ENCODE measurements at regions of chrX and their contacts with region 1.

Region 1: DNA sequence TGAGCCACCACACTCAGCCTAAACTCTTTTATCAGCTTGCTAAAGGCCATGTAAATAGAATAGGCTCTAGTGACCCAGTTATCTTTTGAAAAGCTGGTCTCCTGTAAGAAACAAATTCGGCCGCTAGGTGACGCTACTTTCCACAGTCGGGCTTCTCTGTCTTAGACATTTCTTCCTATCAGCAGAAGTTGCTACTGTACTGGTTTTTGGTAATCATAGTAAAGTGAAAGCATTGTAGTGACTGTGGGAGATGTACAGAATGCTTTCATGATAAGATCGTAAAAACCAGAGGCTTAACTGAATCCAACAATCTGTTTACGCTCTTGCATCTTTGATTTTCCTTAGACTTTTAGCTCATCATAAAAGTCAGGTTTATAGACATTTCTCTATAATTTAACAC is 82.6 kb downstream of the GK start:
- DNase-seq: peak; percentile 82
- H3K4me3 Mint-ChIP-seq: no peak overlapping the region
- H3K27ac Mint-ChIP-seq: no peak overlapping the region
- H3K4me1 Mint-ChIP-seq: peaks cover 10% of the 10 kb centered on the region
- H3K27me3 Mint-ChIP-seq: no peaks in the 10 kb centered on the region

Region 2: GRCh38 chrX:30230395-30230794 is 505.4 kb before region 1 on chrX and contains the start of gene MAGEB3:
- CTCF ChIA-PET with region 1: no interaction called
- POLR2A ChIA-PET with region 1: no interaction called
- intact Hi-C with region 1: no loop called
- DNase-seq: no peak
- H3K4me3 Mint-ChIP-seq: no peak within 1 kb of the TSS
- H3K27ac Mint-ChIP-seq: no peak within 1 kb of the TSS
- H3K4me1 Mint-ChIP-seq: no peaks in the 10 kb centered on the region
- H3K27me3 Mint-ChIP-seq: no peaks in the 10 kb centered on the region
- total RNA-seq, gene MAGEB3: not detected

Region 3: DNA sequence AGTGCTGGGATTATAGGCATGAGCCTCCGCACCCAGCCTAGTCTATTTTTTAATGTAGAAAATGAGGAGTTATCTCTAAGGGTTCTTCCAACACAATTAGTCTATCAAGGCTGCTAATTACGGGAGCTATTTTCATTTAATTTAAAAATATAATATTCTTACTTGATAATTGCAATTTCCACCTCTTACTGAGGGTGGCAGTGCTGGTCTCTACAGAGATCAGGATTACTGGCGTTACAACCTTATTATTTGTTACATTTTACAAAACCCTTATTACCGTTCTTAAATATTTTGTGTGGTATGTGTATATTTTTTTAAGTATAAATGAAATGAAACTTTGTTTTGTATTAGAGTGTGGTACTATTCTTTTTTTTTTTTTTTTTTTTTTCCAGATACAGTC is 100.2 kb before region 1 on chrX:
- CTCF ChIA-PET with region 1: interaction called, 17 read pairs
- POLR2A ChIA-PET with region 1: no interaction called
- intact Hi-C with region 1: no loop called
- DNase-seq: no peak
- H3K4me3 Mint-ChIP-seq: no peak overlapping the region
- H3K27ac Mint-ChIP-seq: no peak overlapping the region
- H3K4me1 Mint-ChIP-seq: peaks cover 2% of the 10 kb centered on the region
- H3K27me3 Mint-ChIP-seq: no peaks in the 10 kb centered on the region

Region 4: GRCh38 chrX:30821116-30821515 is 85.3 kb after region 1 on chrX:
- CTCF ChIA-PET with region 1: interaction called, 7 read pairs
- POLR2A ChIA-PET with region 1: no interaction called
- intact Hi-C with region 1: loop called (anchors 1 kb)
- DNase-seq: no peak
- H3K4me3 Mint-ChIP-seq: no peak overlapping the region
- H3K27ac Mint-ChIP-seq: no peak overlapping the region
- H3K4me1 Mint-ChIP-seq: peaks cover 8% of the 10 kb centered on the region
- H3K27me3 Mint-ChIP-seq: peaks cover 6% of the 10 kb centered on the region

Region 5: GRCh38 chrX:30865015-30865414 is 129.2 kb after region 1 on chrX:
- CTCF ChIA-PET with region 1: interaction called, 15 read pairs
- POLR2A ChIA-PET with region 1: interaction called, 3 read pairs
- intact Hi-C with region 1: no loop called
- DNase-seq: peak; percentile 13
- H3K4me3 Mint-ChIP-seq: no peak overlapping the region
- H3K27ac Mint-ChIP-seq: no peak overlapping the region
- H3K4me1 Mint-ChIP-seq: peaks cover 2% of the 10 kb centered on the region
- H3K27me3 Mint-ChIP-seq: no peaks in the 10 kb centered on the region

Region 6: GRCh38 chrX:31112226-31112999 is 376.6 kb after region 1 on chrX:
- CTCF ChIA-PET with region 1: no interaction called
- POLR2A ChIA-PET with region 1: no interaction called
- intact Hi-C with region 1: no loop called
- DNase-seq: no peak
- H3K4me3 Mint-ChIP-seq: no peak overlapping the region
- H3K27ac Mint-ChIP-seq: no peak overlapping the region
- H3K4me1 Mint-ChIP-seq: no peaks in the 10 kb centered on the region
- H3K27me3 Mint-ChIP-seq: peaks cover 6% of the 10 kb centered on the region

Measured in activated CD4-positive, alpha-beta memory T cell treated with anti-CD3 and anti-CD28 coated beads for 36 hours (primary cell).